CD14-positive monocyte (primary cell): ENCODE measurements at regions of chr6 and their contacts with region 1.

Region 1: DNA sequence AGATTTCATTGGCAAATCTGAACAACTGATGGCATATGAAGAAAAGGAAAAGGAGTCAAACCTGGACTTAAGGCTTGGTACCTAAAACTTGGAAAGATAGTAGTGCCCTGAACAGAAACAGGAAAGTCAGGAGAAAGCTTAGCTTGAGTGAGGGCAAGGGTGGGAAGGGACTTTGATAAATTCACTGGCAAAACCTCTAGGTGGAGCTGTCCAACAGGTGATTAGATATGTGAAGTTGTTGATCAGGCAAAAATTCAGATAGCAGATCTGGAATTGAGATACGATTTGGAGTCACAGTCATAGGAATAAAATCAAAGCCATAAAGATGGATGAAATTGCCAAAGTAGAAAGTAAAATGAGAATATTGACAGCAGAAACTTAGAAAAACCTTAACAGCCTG is 16.1 kb upstream of the ZNF292 start:
- DNase-seq: peak; percentile 40 to 62 (median 59)
- H3K4me3 ChIP-seq: no peak overlapping the region
- H3K4me3 Mint-ChIP-seq: no peak overlapping the region
- H3K27ac ChIP-seq: no peak overlapping the region
- H3K27ac Mint-ChIP-seq: no peak overlapping the region
- H3K4me1 ChIP-seq: peaks cover 0 to 10% of the 10 kb centered on the region in 2 donors
- H3K4me1 Mint-ChIP-seq: peaks cover 6% of the 10 kb centered on the region
- H3K27me3 ChIP-seq: no peaks in the 10 kb centered on the region
- H3K27me3 Mint-ChIP-seq: peaks cover 4 to 14% (median 4%) of the 10 kb centered on the region in 3 donors
- CTCF ChIP-seq: peak; percentile 76

Region 2: DNA sequence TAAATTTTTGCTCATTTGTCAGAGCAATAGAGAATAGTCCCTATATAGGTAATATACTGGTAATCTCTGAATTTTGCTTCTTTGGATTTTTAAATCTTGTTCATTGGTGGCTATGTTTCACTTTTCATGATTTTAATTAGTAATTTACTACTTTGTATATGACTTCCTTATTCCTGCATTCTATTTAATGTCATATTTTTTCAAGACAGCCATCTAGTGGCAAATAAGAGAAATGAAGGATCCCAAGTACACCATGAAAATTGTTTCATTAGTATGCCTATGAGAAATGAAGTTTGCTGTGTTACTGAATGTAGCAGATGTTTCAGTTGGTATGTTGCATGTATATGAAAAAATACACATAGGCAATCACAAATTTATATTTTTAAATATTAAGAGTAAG is 98.6 kb after region 1 on chr6:
- intact Hi-C with region 1: loop called in 1 of 2 experiments (anchors 10 kb)
- DNase-seq: peak; percentile 6 to 34 (median 27)
- H3K4me3 ChIP-seq: no peak overlapping the region
- H3K4me3 Mint-ChIP-seq: no peak overlapping the region
- H3K27ac ChIP-seq: no peak overlapping the region
- H3K27ac Mint-ChIP-seq: no peak overlapping the region
- H3K4me1 ChIP-seq: no peaks in the 10 kb centered on the region
- H3K4me1 Mint-ChIP-seq: no peaks in the 10 kb centered on the region
- H3K27me3 ChIP-seq: no peaks in the 10 kb centered on the region
- H3K27me3 Mint-ChIP-seq: no peaks in the 10 kb centered on the region
- CTCF ChIP-seq: peak; percentile 77

Region 3: GRCh38 chr6:87322304-87323212 is 183.3 kb after region 1 on chr6 and contains the start of gene SMIM8:
- intact Hi-C with region 1: no loop called
- DNase-seq: peak; percentile 44 to 54 (median 54)
- H3K4me3 ChIP-seq: peak within 1 kb of the TSS; percentile 67 to 94 (median 79)
- H3K4me3 Mint-ChIP-seq: peak within 1 kb of the TSS; percentile 99
- H3K27ac ChIP-seq: peak within 1 kb of the TSS; percentile 9 to 74
- H3K27ac Mint-ChIP-seq: peak within 1 kb of the TSS; percentile 62 to 84 (median 82)
- H3K4me1 ChIP-seq: peaks cover 7% of the 10 kb centered on the region in 2 donors
- H3K4me1 Mint-ChIP-seq: peaks cover 11% of the 10 kb centered on the region
- H3K27me3 ChIP-seq: no peaks in the 10 kb centered on the region
- H3K27me3 Mint-ChIP-seq: peaks cover 0 to 3% (median 0%) of the 10 kb centered on the region in 3 donors
- CTCF ChIP-seq: peak; percentile 98
- polyA plus RNA-seq, gene SMIM8: 2.0 to 8.2 (median 5.9) TPM

Region 4: GRCh38 chr6:87333591-87334181 is 194.4 kb after region 1 on chr6:
- intact Hi-C with region 1: no loop called
- DNase-seq: no peak
- H3K4me3 ChIP-seq: no peak overlapping the region
- H3K4me3 Mint-ChIP-seq: no peak overlapping the region
- H3K27ac ChIP-seq: no peak overlapping the region
- H3K27ac Mint-ChIP-seq: peak overlapping the region in 1 of 7 donors; percentile 36
- H3K4me1 ChIP-seq: no peaks in the 10 kb centered on the region
- H3K4me1 Mint-ChIP-seq: peaks cover 10% of the 10 kb centered on the region
- H3K27me3 ChIP-seq: no peaks in the 10 kb centered on the region
- H3K27me3 Mint-ChIP-seq: no peaks in the 10 kb centered on the region
- CTCF ChIP-seq: no peak

Region 5: GRCh38 chr6:87465051-87465450 is 325.8 kb after region 1 on chr6:
- intact Hi-C with region 1: no loop called
- DNase-seq: no peak
- H3K4me3 ChIP-seq: no peak overlapping the region
- H3K4me3 Mint-ChIP-seq: no peak overlapping the region
- H3K27ac ChIP-seq: no peak overlapping the region
- H3K27ac Mint-ChIP-seq: no peak overlapping the region
- H3K4me1 ChIP-seq: no peaks in the 10 kb centered on the region
- H3K4me1 Mint-ChIP-seq: no peaks in the 10 kb centered on the region
- H3K27me3 ChIP-seq: peaks cover 3 to 6% of the 10 kb centered on the region in 2 donors
- H3K27me3 Mint-ChIP-seq: peaks cover 11 to 17% (median 15%) of the 10 kb centered on the region in 3 donors
- CTCF ChIP-seq: no peak